ENCODE measurements at regions of chr6 and their contacts with region 1.

Region 1: GRCh38 chr6:8983188-8983688 is 547.9 kb upstream of the SLC35B3 start:
- DNase-seq: peak; percentile 69
- H3K4me3 Mint-ChIP-seq: peak overlapping the region; percentile 19
- H3K27ac Mint-ChIP-seq: no peak overlapping the region
- H3K4me1 Mint-ChIP-seq: no peaks in the 10 kb centered on the region
- H3K27me3 Mint-ChIP-seq: no peaks in the 10 kb centered on the region
- CTCF ChIP-seq: peak; percentile 76

Region 2: GRCh38 chr6:8707956-8708772 is 275.1 kb before region 1 on chr6:
- CTCF ChIA-PET with region 1: no interaction called
- intact Hi-C with region 1: loop called (anchors 5 kb)
- DNase-seq: peak; percentile 13
- H3K4me3 Mint-ChIP-seq: peak overlapping the region; percentile 21
- H3K27ac Mint-ChIP-seq: no peak overlapping the region
- H3K4me1 Mint-ChIP-seq: peaks cover 6% of the 10 kb centered on the region
- H3K27me3 Mint-ChIP-seq: no peaks in the 10 kb centered on the region
- CTCF ChIP-seq: no peak

Region 3: DNA sequence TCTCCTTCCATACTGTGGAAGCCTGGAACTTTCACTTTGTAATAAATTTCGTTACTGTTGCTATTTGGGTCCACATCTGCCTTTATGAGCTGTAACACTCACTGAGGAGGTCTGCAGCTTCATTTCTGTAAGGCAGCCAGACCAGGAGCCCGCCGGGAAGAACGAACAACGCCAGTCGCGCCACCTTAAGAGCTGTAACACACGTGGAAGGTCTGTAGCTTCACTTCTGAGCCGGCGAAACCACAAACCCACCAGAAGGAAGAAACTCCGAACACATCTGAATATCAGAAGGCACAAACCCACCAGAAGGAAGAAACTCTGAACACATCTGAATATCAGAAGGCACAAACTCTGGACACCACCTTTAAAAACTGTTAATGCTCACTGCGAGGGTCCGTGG is 42.0 kb after region 1 on chr6:
- CTCF ChIA-PET with region 1: no interaction called
- intact Hi-C with region 1: no loop called
- DNase-seq: no peak
- H3K4me3 Mint-ChIP-seq: no peak overlapping the region
- H3K27ac Mint-ChIP-seq: no peak overlapping the region
- H3K4me1 Mint-ChIP-seq: no peaks in the 10 kb centered on the region
- H3K27me3 Mint-ChIP-seq: no peaks in the 10 kb centered on the region
- CTCF ChIP-seq: no peak

Region 4: GRCh38 chr6:9250852-9251251 is 267.6 kb after region 1 on chr6:
- CTCF ChIA-PET with region 1: interaction called, 3 read pairs
- intact Hi-C with region 1: loop called (anchors 2 kb)
- DNase-seq: peak; percentile 55
- H3K4me3 Mint-ChIP-seq: no peak overlapping the region
- H3K27ac Mint-ChIP-seq: no peak overlapping the region
- H3K4me1 Mint-ChIP-seq: peaks cover 14% of the 10 kb centered on the region
- H3K27me3 Mint-ChIP-seq: no peaks in the 10 kb centered on the region
- CTCF ChIP-seq: peak; percentile 30

Region 5: DNA sequence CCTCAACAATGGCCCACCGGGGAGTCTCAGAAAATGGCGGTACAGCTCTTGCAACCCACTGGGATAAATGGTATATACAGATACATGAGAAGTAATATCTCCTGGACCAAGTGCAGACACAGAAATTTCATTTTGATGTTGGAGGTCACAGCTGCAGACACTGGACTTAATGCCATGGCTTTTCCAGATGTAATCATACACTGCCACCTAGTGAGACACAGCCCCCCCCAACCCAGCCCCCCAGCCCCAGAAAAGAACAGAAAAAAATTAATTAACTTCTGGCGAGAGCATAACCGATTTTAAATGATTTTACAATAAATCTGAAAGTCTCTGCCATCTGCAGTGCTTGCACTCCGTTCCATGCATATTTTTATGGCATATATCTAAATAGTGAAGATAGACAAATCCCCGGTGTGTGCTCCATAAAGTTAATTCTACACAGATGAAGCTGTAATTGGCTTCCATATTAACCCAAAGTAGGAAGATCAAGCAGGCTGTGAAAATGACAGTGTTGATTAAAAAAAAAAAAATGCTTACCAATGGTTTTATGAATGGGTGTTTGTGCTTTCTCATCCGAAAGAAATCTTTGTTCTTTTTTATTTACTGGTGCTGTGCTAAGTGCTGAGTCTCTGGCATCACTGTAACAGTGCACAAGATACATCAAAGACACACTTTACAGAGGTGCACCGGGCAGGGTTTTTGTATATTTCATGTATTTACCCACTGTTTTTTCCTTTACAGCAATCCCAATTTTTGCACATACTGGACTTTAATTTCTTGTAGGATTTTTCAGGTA is 627.6 kb after region 1 on chr6:
- CTCF ChIA-PET with region 1: no interaction called
- intact Hi-C with region 1: loop called (anchors 10 kb)
- DNase-seq: no peak
- H3K4me3 Mint-ChIP-seq: no peak overlapping the region
- H3K27ac Mint-ChIP-seq: no peak overlapping the region
- H3K4me1 Mint-ChIP-seq: no peaks in the 10 kb centered on the region
- H3K27me3 Mint-ChIP-seq: no peaks in the 10 kb centered on the region
- CTCF ChIP-seq: no peak

Region 6: DNA sequence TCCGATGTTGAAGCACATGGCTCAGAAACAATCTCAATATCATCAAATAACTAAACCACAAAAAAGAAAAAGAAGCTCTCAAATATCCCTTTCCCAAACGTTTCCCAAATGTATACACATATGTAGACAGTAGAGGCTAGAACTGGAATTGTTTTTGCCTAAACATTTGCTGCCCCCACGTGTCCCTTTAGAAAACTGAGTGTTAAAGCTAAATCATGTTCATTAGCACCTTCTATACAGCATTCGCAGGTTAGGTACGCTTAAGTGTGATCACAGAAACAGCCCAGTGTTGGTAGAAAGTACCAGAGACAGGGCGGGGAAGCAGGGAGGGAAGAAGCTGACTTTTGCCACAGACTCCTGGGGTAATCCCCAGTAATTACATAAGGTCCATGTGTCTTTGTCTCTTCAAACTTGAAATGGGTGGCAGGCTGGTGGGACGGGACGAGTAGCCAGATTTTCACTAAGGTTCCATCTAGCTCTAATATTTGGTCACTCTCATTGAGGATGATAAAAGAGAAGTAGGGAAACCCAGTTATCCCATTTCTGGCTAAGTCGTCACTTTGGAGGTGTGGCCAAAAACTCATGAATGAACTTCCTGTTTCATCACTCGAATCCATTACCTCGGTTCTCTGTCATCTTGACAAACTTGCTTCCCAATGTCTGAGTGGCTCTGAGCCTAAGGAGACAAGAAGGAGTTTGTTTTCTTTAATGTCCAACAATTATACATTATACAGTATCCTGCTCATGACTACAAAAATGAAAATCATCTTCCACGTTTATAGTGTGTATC is 1446.6 kb after region 1 on chr6:
- CTCF ChIA-PET with region 1: interaction called, 4 read pairs
- intact Hi-C with region 1: loop called (anchors 2 kb)
- DNase-seq: peak; percentile 51
- H3K4me3 Mint-ChIP-seq: peak overlapping the region; percentile 42
- H3K27ac Mint-ChIP-seq: peak overlapping the region; percentile 85
- H3K4me1 Mint-ChIP-seq: peaks cover 30% of the 10 kb centered on the region
- H3K27me3 Mint-ChIP-seq: no peaks in the 10 kb centered on the region
- CTCF ChIP-seq: no peak